ENCODE measurements at regions of chr13 and their contacts with region 1.

Region 1: DNA sequence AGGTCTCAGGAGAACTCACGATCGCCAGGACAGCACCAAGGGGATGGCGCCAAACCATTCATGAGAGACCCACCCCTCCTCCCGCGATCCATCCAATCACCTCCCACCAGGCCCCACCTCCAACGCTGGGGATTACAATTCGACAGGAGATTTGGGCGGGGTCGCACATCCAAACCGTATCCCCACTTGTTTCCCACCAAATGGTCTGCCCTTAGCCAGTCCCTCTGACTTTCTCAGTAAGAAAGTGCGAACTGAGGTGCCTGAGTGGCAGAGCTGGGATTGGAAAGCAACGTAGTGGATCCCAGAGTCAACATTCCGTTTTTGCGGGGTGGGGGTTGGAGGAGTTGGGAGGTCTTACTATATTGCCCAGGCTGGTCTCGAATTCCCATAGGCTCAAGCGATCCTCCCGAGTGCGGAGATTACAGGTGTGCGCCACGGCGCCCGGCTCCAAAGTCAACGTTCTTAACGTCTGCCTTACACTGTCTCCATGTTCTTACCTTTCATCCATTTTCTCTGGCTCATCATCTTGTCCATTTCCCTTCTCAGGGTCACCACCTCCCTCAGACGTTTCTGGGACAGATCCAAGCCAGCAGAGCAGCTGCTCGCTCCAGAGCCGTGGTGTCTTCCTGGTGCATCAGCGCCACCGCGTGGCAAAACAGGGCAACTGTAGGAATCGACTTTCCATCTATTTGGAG is 102.7 kb upstream of the ABCC4 start:
- DNase-seq: peak; percentile 82 to 83
- H3K4me3 ChIP-seq: no peak overlapping the region
- H3K27ac ChIP-seq: no peak overlapping the region
- H3K4me1 ChIP-seq: peaks cover 8% of the 10 kb centered on the region
- H3K27me3 ChIP-seq: no peaks in the 10 kb centered on the region
- CTCF ChIP-seq: peak; percentile 98

Region 2: DNA sequence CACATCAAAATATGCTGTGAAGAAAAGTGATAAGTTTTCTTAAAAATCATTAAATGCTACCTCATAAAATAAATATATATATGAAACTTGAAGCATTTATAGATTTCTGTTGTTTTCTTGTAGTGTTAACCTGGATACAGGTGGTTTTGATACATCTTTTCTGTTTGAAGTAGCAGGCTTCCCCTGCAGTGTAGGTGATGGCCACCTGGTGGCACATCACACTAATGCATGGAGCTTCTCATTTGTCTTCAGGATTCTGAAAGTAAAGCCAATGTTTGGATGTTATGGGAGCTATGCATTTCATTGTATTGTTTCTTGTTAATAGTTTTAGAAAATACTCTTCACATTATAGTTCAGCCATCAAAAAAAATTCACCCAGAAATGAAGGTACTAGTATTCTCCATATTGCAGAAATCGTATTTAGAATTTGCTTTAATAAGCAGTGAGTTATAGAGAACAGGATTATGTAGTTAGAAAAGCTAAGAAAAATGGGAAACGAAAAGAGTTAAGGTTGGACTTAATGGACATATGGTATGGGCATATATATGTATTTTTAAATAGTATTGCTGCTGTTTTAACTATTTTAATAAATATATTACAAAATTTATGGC is 783.6 kb before region 1 on chr13:
- CTCF ChIA-PET with region 1: interaction called, 12 read pairs
- POLR2A ChIA-PET with region 1: no interaction called
- intact Hi-C with region 1: loop called (anchors 5 kb)
- DNase-seq: peak in 1 of 2 experiments; percentile 25
- H3K4me3 ChIP-seq: no peak overlapping the region
- H3K27ac ChIP-seq: no peak overlapping the region
- H3K4me1 ChIP-seq: no peaks in the 10 kb centered on the region
- H3K27me3 ChIP-seq: no peaks in the 10 kb centered on the region
- CTCF ChIP-seq: peak; percentile 93

Region 3: DNA sequence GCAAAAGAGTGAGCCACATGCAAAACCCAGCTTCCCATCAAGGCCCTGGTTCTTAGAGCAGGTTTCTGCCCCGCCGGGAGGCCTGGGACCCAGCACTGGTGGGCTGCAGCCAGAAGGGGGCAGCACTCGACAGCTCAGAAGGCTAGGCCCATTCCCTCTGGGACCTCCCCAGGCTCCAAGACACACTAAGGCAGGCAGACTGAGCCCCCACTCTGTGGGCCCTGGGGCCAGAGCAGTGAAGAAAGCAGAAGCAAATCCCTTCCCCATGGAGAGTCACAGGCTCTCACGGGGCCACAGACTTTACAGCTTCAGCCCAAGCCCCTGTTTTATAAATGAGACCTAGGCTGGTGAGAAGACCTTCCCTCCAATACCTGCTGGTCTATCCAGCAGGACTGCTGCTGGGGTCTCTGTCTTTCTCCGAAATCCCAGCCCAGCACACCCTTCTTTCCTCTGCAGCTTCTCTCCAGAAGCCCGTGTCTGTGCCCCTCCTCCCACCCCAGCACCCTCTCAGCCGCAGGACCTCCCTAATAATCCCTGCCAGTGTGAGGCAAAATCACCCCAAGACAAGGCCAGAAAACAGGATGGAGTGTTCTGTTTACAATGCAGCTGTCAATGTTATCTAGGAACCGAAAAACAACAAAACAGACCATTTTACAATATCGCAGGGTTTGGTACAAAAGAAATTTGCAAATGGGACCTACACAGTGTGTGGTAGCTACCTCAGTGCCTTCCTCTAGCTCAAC is 212.0 kb before region 1 on chr13:
- CTCF ChIA-PET with region 1: interaction called, 18 read pairs
- POLR2A ChIA-PET with region 1: interaction called, 5 read pairs
- intact Hi-C with region 1: loop called (anchors 1 kb)
- DNase-seq: peak; percentile 67 to 78
- H3K4me3 ChIP-seq: no peak overlapping the region
- H3K27ac ChIP-seq: no peak overlapping the region
- H3K4me1 ChIP-seq: no peaks in the 10 kb centered on the region
- H3K27me3 ChIP-seq: no peaks in the 10 kb centered on the region
- CTCF ChIP-seq: peak; percentile 96

Region 4: GRCh38 chr13:95480131-95480545 is 76.2 kb after region 1 on chr13:
- CTCF ChIA-PET with region 1: no interaction called
- POLR2A ChIA-PET with region 1: no interaction called
- intact Hi-C with region 1: loop called (anchors 1 kb)
- DNase-seq: no peak
- H3K4me3 ChIP-seq: no peak overlapping the region
- H3K27ac ChIP-seq: no peak overlapping the region
- H3K4me1 ChIP-seq: peaks cover 1% of the 10 kb centered on the region; the same call in 1 of the 2 replicates
- H3K27me3 ChIP-seq: 0 out of 2 replicates have a peak, but pooled peaks cover 4% of the 10 kb centered on the region
- CTCF ChIP-seq: no peak

Measured in PC-9 (cell line).